Activated naive CD4-positive, alpha-beta T cell treated with anti-CD3 and anti-CD28 coated beads for 36 hours (primary cell): ENCODE measurements at regions of chrX and their contacts with region 1.

Region 1: DNA sequence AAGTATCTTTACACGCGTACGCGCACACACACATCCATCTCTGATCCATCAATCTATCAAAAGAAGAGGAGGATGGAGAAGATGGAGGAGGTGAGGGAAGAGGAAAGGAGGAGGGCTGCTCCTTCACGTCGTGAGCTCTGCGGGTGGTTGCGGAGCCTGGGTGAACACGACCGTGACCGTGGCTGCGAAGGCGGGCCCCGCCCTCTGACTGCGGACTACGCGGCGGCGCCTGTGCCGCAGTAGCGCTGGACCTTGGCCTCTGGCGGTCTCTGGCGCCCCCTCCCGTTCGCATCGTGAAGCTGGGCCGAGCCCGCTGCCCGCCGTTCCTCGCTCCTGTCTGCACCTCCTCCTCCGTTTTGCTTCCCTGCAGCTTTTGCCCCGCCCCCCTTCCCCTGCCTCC is 37.7 kb upstream of the ARAF start:
- DNase-seq: peak; percentile 82
- H3K4me3 Mint-ChIP-seq: peak overlapping the region; percentile 62
- H3K27ac Mint-ChIP-seq: no peak overlapping the region
- H3K4me1 Mint-ChIP-seq: no peaks in the 10 kb centered on the region
- H3K27me3 Mint-ChIP-seq: no peaks in the 10 kb centered on the region

Region 2: GRCh38 chrX:47497273-47497672 is 26.0 kb before region 1 on chrX:
- CTCF ChIA-PET with region 1: interaction called, 7 read pairs
- intact Hi-C with region 1: loop called (anchors 2 kb)
- DNase-seq: no peak
- H3K4me3 Mint-ChIP-seq: no peak overlapping the region
- H3K27ac Mint-ChIP-seq: no peak overlapping the region
- H3K4me1 Mint-ChIP-seq: no peaks in the 10 kb centered on the region
- H3K27me3 Mint-ChIP-seq: no peaks in the 10 kb centered on the region

Region 3: GRCh38 chrX:47707031-47707780 is 183.9 kb after region 1 on chrX:
- CTCF ChIA-PET with region 1: no interaction called
- intact Hi-C with region 1: no loop called
- DNase-seq: no peak
- H3K4me3 Mint-ChIP-seq: no peak overlapping the region
- H3K27ac Mint-ChIP-seq: no peak overlapping the region
- H3K4me1 Mint-ChIP-seq: no peaks in the 10 kb centered on the region
- H3K27me3 Mint-ChIP-seq: no peaks in the 10 kb centered on the region